Activated CD8-positive, alpha-beta T cell treated with anti-CD3 and anti-CD28 coated beads, Interleukin-2, amount 10 ng/mL, durations not matched to agents 7 days and 5 days (primary cell): ENCODE measurements at regions of chr2 and their contacts with region 1.

Region 1: GRCh38 chr2:60612033-60612432 is 58.6 kb upstream of the BCL11A start:
- DNase-seq: no peak
- ATAC-seq: no peak
- H3K4me3 Mint-ChIP-seq: no peak overlapping the region
- H3K27ac Mint-ChIP-seq: no peak overlapping the region
- H3K4me1 Mint-ChIP-seq: no peaks in the 10 kb centered on the region
- H3K27me3 Mint-ChIP-seq: peaks cover 12% of the 10 kb centered on the region

Region 2: GRCh38 chr2:60641811-60642788 is 30.1 kb after region 1 on chr2:
- CTCF ChIA-PET with region 1: interaction called, 10 read pairs
- POLR2A ChIA-PET with region 1: no interaction called
- DNase-seq: peak; percentile 49
- ATAC-seq: peak; percentile 49
- H3K4me3 Mint-ChIP-seq: no peak overlapping the region
- H3K27ac Mint-ChIP-seq: no peak overlapping the region
- H3K4me1 Mint-ChIP-seq: no peaks in the 10 kb centered on the region
- H3K27me3 Mint-ChIP-seq: peaks cover 7% of the 10 kb centered on the region